ENCODE measurements at regions of chr19 and their contacts with region 1.

Region 1: GRCh38 chr19:38647368-38647965 is at the start of gene ACTN4:
- DNase-seq: peak; percentile 98 to 100
- H3K4me3 ChIP-seq: peak within 1 kb of the TSS; percentile 100
- H3K4me3 Mint-ChIP-seq: peak within 1 kb of the TSS; percentile 90
- H3K27ac Mint-ChIP-seq: peak within 1 kb of the TSS; percentile 88
- H3K4me1 ChIP-seq: peaks cover 30% of the 10 kb centered on the region
- H3K4me1 Mint-ChIP-seq: peaks cover 16% of the 10 kb centered on the region
- H3K27me3 ChIP-seq: no peaks in the 10 kb centered on the region
- H3K27me3 Mint-ChIP-seq: no peaks in the 10 kb centered on the region
- CTCF ChIP-seq: no peak
- total RNA-seq, gene ACTN4: 605 and 658 TPM in 2 replicates

Region 2: DNA sequence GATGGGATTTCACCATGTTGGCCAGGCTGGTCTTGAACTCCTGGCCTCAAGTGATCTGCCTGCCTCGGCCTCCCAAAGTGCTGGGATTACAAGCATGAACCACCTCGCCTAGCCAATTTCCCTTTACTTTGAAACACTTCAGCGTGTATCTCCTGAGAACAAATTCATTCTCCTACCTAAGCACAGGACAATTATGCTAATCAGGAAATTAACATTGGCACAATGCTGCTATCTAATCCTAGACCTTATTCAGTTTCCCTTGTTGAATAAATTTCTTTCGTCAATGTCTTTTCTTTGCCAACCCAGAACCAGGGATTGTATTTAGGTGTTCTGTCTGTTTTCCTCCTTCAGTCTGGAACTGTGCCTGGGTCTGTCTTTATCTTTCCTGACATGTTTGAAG is 97.5 kb before region 1 on chr19:
- CTCF ChIA-PET with region 1: interaction called, 8 read pairs
- POLR2A ChIA-PET with region 1: interaction called, 12 read pairs
- intact Hi-C with region 1: no loop called
- DNase-seq: no peak
- H3K4me3 ChIP-seq: no peak overlapping the region
- H3K4me3 Mint-ChIP-seq: no peak overlapping the region
- H3K27ac Mint-ChIP-seq: no peak overlapping the region
- H3K4me1 ChIP-seq: no peaks in the 10 kb centered on the region
- H3K4me1 Mint-ChIP-seq: peaks cover 4% of the 10 kb centered on the region
- H3K27me3 ChIP-seq: no peaks in the 10 kb centered on the region
- H3K27me3 Mint-ChIP-seq: peaks cover 9% of the 10 kb centered on the region
- CTCF ChIP-seq: no peak

Region 3: GRCh38 chr19:38624822-38625221 is 22.6 kb before region 1 on chr19:
- CTCF ChIA-PET with region 1: no interaction called
- POLR2A ChIA-PET with region 1: no interaction called
- intact Hi-C with region 1: no loop called
- DNase-seq: no peak
- H3K4me3 ChIP-seq: no peak overlapping the region
- H3K4me3 Mint-ChIP-seq: no peak overlapping the region
- H3K27ac Mint-ChIP-seq: no peak overlapping the region
- H3K4me1 ChIP-seq: no peaks in the 10 kb centered on the region
- H3K4me1 Mint-ChIP-seq: peaks cover 3% of the 10 kb centered on the region
- H3K27me3 ChIP-seq: no peaks in the 10 kb centered on the region
- H3K27me3 Mint-ChIP-seq: no peaks in the 10 kb centered on the region
- CTCF ChIP-seq: no peak

Region 4: GRCh38 chr19:38634757-38635482 is 12.5 kb before region 1 on chr19:
- CTCF ChIA-PET with region 1: interaction called, 15 read pairs
- POLR2A ChIA-PET with region 1: interaction called, 3 read pairs
- intact Hi-C with region 1: no loop called
- DNase-seq: peak; percentile 75 to 86
- H3K4me3 ChIP-seq: no peak overlapping the region
- H3K4me3 Mint-ChIP-seq: no peak overlapping the region
- H3K27ac Mint-ChIP-seq: peak overlapping the region; percentile 58
- H3K4me1 ChIP-seq: peaks cover 59% of the 10 kb centered on the region
- H3K4me1 Mint-ChIP-seq: peaks cover 28% of the 10 kb centered on the region
- H3K27me3 ChIP-seq: no peaks in the 10 kb centered on the region
- H3K27me3 Mint-ChIP-seq: no peaks in the 10 kb centered on the region
- CTCF ChIP-seq: peak; percentile 95 to 97

Region 5: DNA sequence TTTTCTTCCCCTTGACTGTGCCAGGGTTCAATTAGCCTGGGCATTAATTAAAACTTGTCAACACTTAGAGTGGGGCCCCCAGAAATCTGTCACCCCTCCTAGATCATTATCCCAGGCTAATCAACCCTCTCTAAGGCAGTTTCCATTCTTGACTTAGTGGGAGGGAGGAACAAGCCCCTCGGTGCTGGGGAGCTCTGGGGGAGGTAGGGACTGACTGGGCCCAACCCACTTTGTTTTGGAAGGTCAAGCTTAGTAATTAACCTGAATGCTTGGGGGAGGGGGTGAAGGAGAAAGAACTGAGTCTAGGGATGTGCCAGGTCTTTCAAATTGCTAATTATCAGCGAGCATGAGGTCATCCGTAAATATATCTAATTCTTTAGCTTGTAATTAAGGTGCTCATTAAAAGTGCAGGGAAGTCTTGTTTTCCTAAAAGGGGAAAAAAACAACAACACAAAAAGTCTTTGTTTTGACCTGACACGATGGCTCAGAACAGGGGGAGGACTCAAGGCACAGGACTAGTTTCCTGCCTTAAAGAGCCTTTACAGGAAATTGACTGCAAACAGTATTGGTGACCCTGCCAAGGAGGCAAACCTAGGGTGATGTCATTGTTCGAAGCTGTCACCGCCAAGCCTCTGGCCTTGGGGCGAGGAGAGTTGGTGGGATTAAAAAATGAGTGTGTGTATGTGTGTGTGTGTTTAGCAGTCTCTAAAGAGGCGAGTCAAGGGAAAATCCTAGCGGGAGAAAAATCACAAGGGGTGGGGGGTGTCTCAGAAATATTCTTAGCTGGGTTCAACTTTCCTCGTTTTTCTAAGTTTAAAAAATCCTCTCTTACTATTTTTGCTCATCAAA is 19.4 kb after region 1 on chr19:
- CTCF ChIA-PET with region 1: interaction called, 3 read pairs
- POLR2A ChIA-PET with region 1: interaction called, 11 read pairs
- intact Hi-C with region 1: loop called (anchors 2 kb)
- DNase-seq: no peak
- H3K4me3 ChIP-seq: no peak overlapping the region
- H3K4me3 Mint-ChIP-seq: peak overlapping the region; percentile 69
- H3K27ac Mint-ChIP-seq: peak overlapping the region; percentile 88
- H3K4me1 ChIP-seq: peaks cover 100% of the 10 kb centered on the region
- H3K4me1 Mint-ChIP-seq: peaks cover 86% of the 10 kb centered on the region
- H3K27me3 ChIP-seq: no peaks in the 10 kb centered on the region
- H3K27me3 Mint-ChIP-seq: no peaks in the 10 kb centered on the region
- CTCF ChIP-seq: no peak

Region 6: DNA sequence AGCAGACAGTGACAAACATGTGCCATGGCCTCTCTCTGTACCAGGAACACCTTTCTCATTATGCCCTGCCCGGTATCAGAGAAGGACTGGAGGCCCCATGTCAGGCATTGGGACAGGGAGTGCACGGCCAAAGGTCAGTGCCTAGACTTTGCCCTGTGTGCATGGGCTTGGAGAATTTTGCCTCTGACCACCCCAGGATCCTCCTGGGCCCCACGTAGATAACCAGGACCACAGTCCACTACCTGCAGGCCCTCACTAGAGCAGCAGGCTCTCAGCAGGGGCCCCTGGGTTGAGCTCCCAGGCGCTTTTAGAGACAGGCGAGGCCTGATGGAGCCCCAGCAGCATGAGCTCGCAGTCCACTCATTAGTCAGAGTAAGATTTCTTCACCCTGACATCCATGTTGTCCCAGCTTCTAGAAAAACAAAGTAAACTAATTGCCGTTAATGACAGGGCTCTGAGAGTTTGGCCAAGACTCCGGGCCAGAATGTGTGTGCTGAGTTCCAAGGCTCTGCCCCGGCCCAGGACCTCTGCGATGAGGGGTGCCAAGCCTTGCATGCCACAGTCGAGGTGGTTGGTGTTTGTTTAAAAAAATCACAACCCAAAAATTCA is 54.1 kb after region 1 on chr19:
- CTCF ChIA-PET with region 1: interaction called, 5 read pairs
- POLR2A ChIA-PET with region 1: interaction called, 13 read pairs
- intact Hi-C with region 1: no loop called
- DNase-seq: peak; percentile 89 to 96
- H3K4me3 ChIP-seq: no peak overlapping the region
- H3K4me3 Mint-ChIP-seq: peak overlapping the region; percentile 47
- H3K27ac Mint-ChIP-seq: peak overlapping the region; percentile 82
- H3K4me1 ChIP-seq: peaks cover 60% of the 10 kb centered on the region
- H3K4me1 Mint-ChIP-seq: peaks cover 33% of the 10 kb centered on the region
- H3K27me3 ChIP-seq: no peaks in the 10 kb centered on the region
- H3K27me3 Mint-ChIP-seq: no peaks in the 10 kb centered on the region
- CTCF ChIP-seq: no peak

Measured in Caco-2 (cell line).